CD8-positive, alpha-beta T cell (primary cell): ENCODE measurements at regions of chr6 and their contacts with region 1.

Region 1: DNA sequence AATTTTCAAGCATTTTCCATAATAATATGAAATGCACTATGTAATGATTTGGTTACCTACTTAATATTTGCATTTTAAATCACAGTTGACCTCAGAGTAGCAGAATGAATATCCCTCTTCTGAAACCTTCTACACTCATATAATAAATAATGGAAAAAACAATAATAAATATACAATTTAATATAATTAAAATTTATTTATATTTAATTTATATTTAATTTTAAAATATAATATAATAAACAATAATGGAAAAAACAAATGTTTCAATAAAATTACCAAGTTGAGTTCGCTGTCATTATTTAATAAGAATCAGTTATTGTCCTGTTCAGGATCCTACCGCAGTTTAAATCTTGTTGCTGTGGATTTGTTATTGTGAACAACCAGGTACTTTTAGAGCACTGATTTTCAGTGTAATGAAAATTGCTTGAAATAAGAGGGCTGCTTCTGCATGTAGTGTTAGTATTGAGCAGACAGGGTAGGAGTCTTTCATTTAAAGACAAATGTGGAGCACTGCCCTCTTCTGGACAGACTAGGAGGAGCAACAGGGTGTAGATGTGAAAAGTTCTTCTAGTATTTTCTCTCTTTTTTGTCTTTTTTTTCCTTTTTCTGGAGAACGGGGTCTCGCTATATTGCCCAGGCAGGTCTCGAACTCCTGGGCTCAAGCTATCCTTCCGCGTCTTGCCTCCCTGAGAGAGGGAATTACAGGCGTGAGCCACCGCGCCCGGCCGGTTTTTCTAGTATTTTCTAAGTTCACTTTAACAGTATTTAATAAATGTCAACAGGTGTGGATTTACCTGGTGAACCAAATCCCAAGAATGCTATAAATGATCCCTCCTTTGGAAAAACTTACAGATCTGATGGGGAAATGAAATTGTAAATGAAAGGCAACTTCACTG is 13.6 kb downstream of the TRAPPC3L start:
- DNase-seq: peak; percentile 19 to 78 (median 62)
- ATAC-seq: peak; percentile 99
- H3K4me3 ChIP-seq: no peak overlapping the region
- H3K4me3 Mint-ChIP-seq: no peak overlapping the region
- H3K27ac ChIP-seq: no peak overlapping the region
- H3K27ac Mint-ChIP-seq: no peak overlapping the region
- H3K4me1 ChIP-seq: no peaks in the 10 kb centered on the region
- H3K4me1 Mint-ChIP-seq: no peaks in the 10 kb centered on the region
- H3K27me3 ChIP-seq: no peaks in the 10 kb centered on the region
- H3K27me3 Mint-ChIP-seq: peaks cover 9% of the 10 kb centered on the region
- CTCF ChIP-seq: peak; percentile 91

Region 2: GRCh38 chr6:116268589-116269293 is 263.2 kb before region 1 on chr6:
- CTCF ChIA-PET with region 1: interaction called, 15 read pairs
- POLR2A ChIA-PET with region 1: no interaction called
- intact Hi-C with region 1: loop called (anchors 1 kb)
- DNase-seq: peak in 2 of 9 experiments; percentile 69 to 79
- ATAC-seq: peak; percentile 82
- H3K4me3 ChIP-seq: no peak overlapping the region
- H3K4me3 Mint-ChIP-seq: no peak overlapping the region
- H3K27ac ChIP-seq: no peak overlapping the region
- H3K27ac Mint-ChIP-seq: peak overlapping the region; percentile 9
- H3K4me1 ChIP-seq: peaks cover 17% of the 10 kb centered on the region
- H3K4me1 Mint-ChIP-seq: peaks cover 42% of the 10 kb centered on the region
- H3K27me3 ChIP-seq: no peaks in the 10 kb centered on the region
- H3K27me3 Mint-ChIP-seq: no peaks in the 10 kb centered on the region
- CTCF ChIP-seq: peak; percentile 82

Region 3: GRCh38 chr6:116444092-116444491 is 87.8 kb before region 1 on chr6:
- CTCF ChIA-PET with region 1: interaction called, 7 read pairs
- POLR2A ChIA-PET with region 1: no interaction called
- intact Hi-C with region 1: loop called (anchors 1 to 5 kb)
- DNase-seq: peak in 2 of 9 experiments; percentile 43 to 46
- ATAC-seq: peak; percentile 68
- H3K4me3 ChIP-seq: no peak overlapping the region
- H3K4me3 Mint-ChIP-seq: no peak overlapping the region
- H3K27ac ChIP-seq: no peak overlapping the region
- H3K27ac Mint-ChIP-seq: no peak overlapping the region
- H3K4me1 ChIP-seq: no peaks in the 10 kb centered on the region
- H3K4me1 Mint-ChIP-seq: peaks cover 11% of the 10 kb centered on the region
- H3K27me3 ChIP-seq: no peaks in the 10 kb centered on the region
- H3K27me3 Mint-ChIP-seq: peaks cover 8% of the 10 kb centered on the region
- CTCF ChIP-seq: peak; percentile 62

Region 4: GRCh38 chr6:116561377-116562018 is 29.6 kb after region 1 on chr6:
- CTCF ChIA-PET with region 1: interaction called, 20 read pairs
- POLR2A ChIA-PET with region 1: no interaction called
- intact Hi-C with region 1: loop called (anchors 1 to 2 kb)
- DNase-seq: peak; percentile 29 to 77 (median 67)
- ATAC-seq: peak; percentile 93
- H3K4me3 ChIP-seq: no peak overlapping the region
- H3K4me3 Mint-ChIP-seq: no peak overlapping the region
- H3K27ac ChIP-seq: no peak overlapping the region
- H3K27ac Mint-ChIP-seq: no peak overlapping the region
- H3K4me1 ChIP-seq: no peaks in the 10 kb centered on the region
- H3K4me1 Mint-ChIP-seq: peaks cover 3% of the 10 kb centered on the region
- H3K27me3 ChIP-seq: no peaks in the 10 kb centered on the region
- H3K27me3 Mint-ChIP-seq: peaks cover 9% of the 10 kb centered on the region
- CTCF ChIP-seq: peak; percentile 95

Region 5: GRCh38 chr6:116847227-116847626 is 315.3 kb after region 1 on chr6:
- CTCF ChIA-PET with region 1: no interaction called
- POLR2A ChIA-PET with region 1: no interaction called
- intact Hi-C with region 1: loop called in 1 of 2 experiments (anchors 10 kb)
- DNase-seq: peak in 1 of 9 experiments; percentile 3
- ATAC-seq: no peak
- H3K4me3 ChIP-seq: no peak overlapping the region
- H3K4me3 Mint-ChIP-seq: no peak overlapping the region
- H3K27ac ChIP-seq: no peak overlapping the region
- H3K27ac Mint-ChIP-seq: no peak overlapping the region
- H3K4me1 ChIP-seq: no peaks in the 10 kb centered on the region
- H3K4me1 Mint-ChIP-seq: no peaks in the 10 kb centered on the region
- H3K27me3 ChIP-seq: no peaks in the 10 kb centered on the region
- H3K27me3 Mint-ChIP-seq: peaks cover 2% of the 10 kb centered on the region
- CTCF ChIP-seq: no peak